ENCODE measurements at regions of chr20 and their contacts with region 1.

Region 1: GRCh38 chr20:49928401-49929141 is 7.6 kb upstream of the RNF114 start:
- DNase-seq: peak; percentile 71
- H3K4me3 Mint-ChIP-seq: no peak overlapping the region
- H3K27ac Mint-ChIP-seq: peak overlapping the region; percentile 49
- H3K4me1 Mint-ChIP-seq: peaks cover 6% of the 10 kb centered on the region
- H3K27me3 Mint-ChIP-seq: peaks cover 3% of the 10 kb centered on the region

Region 2: DNA sequence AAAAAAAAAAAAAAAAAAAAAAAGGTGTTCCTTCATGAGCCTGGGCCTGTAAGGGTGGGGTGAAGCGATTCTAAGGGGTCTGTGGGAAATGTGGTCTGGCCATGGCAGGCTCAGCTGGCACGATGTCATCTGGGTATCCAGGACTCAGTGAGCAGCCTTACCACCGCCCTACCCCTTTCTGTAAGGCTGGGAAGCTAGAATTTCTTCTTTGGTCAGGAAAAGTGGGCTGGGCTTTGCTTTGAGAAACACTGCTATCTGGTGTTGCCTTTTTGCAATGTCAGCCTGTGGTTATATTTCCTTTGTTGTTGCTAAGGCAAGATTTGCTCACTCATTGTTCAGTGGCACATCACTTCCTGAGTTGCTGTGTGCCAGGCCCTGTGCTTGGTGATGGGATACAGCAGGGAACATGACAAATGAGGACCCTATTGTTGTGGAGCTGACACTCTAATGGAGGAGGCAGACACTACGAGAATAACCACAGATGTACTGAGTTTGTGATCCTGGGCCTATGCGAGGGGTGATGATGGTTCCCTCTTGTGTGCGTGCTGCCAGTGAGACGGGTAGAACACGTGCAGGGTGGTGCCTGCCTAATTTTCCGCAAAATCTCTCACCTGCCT is 604.8 kb before region 1 on chr20:
- intact Hi-C with region 1: loop called (anchors 10 kb)
- DNase-seq: peak; percentile 32
- H3K4me3 Mint-ChIP-seq: no peak overlapping the region
- H3K27ac Mint-ChIP-seq: peak overlapping the region; percentile 36
- H3K4me1 Mint-ChIP-seq: peaks cover 23% of the 10 kb centered on the region
- H3K27me3 Mint-ChIP-seq: peaks cover 58% of the 10 kb centered on the region

Region 3: GRCh38 chr20:49915378-49916145 is 13.0 kb before region 1 on chr20 and contains the start of gene SPATA2:
- intact Hi-C with region 1: no loop called
- DNase-seq: peak; percentile 89
- H3K4me3 Mint-ChIP-seq: peak within 1 kb of the TSS; percentile 96
- H3K27ac Mint-ChIP-seq: peak within 1 kb of the TSS; percentile 100
- H3K4me1 Mint-ChIP-seq: peaks cover 23% of the 10 kb centered on the region
- H3K27me3 Mint-ChIP-seq: no peaks in the 10 kb centered on the region
- total RNA-seq, gene SPATA2: 8.3 and 8.5 TPM in 2 replicates